Caco-2 (cell line): ENCODE measurements at regions of chr2 and their contacts with region 1.

Region 1: DNA sequence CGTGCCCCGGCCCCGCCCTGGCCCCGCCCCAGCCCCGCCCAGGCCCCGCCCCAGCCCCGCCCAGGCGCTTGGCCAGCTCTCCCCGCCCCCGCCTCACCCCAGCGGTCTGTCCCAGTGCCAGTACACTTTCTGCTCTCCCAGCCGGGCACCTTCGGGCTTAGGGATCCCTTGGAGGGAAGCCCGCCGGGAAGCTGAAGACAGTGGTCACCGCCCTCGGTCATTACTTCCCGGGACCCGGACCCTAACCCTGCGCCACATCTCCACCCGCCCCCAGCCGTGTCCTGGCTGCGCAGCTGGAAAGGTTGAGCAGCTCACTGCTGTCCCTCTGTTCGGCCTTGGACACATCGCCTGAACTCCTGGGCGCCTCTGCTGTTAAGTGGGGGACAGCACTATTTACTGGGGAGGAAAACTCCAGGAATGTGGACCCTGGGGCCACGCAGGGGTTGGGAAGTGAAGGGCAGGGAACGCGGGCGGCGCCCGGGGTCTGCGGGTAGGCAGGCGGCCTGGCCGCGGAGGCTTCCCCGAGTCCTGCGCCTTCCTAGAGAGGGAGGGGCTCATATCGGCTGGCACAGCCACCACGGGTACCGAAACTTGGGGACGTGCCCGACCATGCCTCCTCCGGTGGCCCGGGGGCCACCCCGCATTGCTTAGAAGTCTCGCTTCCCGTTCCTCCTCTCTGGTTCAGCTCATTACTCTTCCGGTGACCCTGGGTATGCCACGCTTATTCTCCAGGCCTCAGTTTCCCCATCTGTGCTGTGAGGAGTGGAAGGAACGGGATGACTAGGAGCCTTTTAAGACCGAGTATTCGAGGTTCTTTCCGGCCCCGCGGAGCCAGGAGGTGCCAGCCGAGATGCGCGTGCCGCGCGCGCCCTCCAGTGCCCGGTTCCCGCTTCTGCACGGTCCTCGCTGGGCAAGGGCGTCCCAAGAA is 121.0 kb downstream of the GYPC start:
- DNase-seq: peak; percentile 76 to 87
- H3K4me3 ChIP-seq: peak overlapping the region; percentile 44
- H3K4me3 Mint-ChIP-seq: peak overlapping the region; percentile 88
- H3K27ac Mint-ChIP-seq: peak overlapping the region; percentile 29
- H3K4me1 ChIP-seq: no peaks in the 10 kb centered on the region
- H3K4me1 Mint-ChIP-seq: peaks cover 6% of the 10 kb centered on the region
- H3K27me3 ChIP-seq: peaks cover 4% of the 10 kb centered on the region; the same call in 1 of the 2 replicates
- H3K27me3 Mint-ChIP-seq: peaks cover 28% of the 10 kb centered on the region
- CTCF ChIP-seq: peak; percentile 94 to 98

Region 2: GRCh38 chr2:124810132-124810531 is 1966.8 kb before region 1 on chr2:
- CTCF ChIA-PET with region 1: no interaction called
- POLR2A ChIA-PET with region 1: no interaction called
- intact Hi-C with region 1: loop called (anchors 1 kb)
- DNase-seq: peak; percentile 55 to 67
- H3K4me3 ChIP-seq: no peak overlapping the region
- H3K4me3 Mint-ChIP-seq: no peak overlapping the region
- H3K27ac Mint-ChIP-seq: no peak overlapping the region
- H3K4me1 ChIP-seq: peaks cover 6% of the 10 kb centered on the region; the same call in 1 of the 2 replicates
- H3K4me1 Mint-ChIP-seq: peaks cover 13% of the 10 kb centered on the region
- H3K27me3 ChIP-seq: no peaks in the 10 kb centered on the region
- H3K27me3 Mint-ChIP-seq: peaks cover 3% of the 10 kb centered on the region
- CTCF ChIP-seq: peak; percentile 33 to 63

Region 3: GRCh38 chr2:126244937-126245336 is 532.0 kb before region 1 on chr2:
- CTCF ChIA-PET with region 1: no interaction called
- POLR2A ChIA-PET with region 1: no interaction called
- intact Hi-C with region 1: loop called (anchors 1 kb)
- DNase-seq: peak; percentile 62 to 72
- H3K4me3 ChIP-seq: no peak overlapping the region
- H3K4me3 Mint-ChIP-seq: no peak overlapping the region
- H3K27ac Mint-ChIP-seq: no peak overlapping the region
- H3K4me1 ChIP-seq: no peaks in the 10 kb centered on the region
- H3K4me1 Mint-ChIP-seq: no peaks in the 10 kb centered on the region
- H3K27me3 ChIP-seq: no peaks in the 10 kb centered on the region
- H3K27me3 Mint-ChIP-seq: no peaks in the 10 kb centered on the region
- CTCF ChIP-seq: peak; percentile 60 to 79

Region 4: GRCh38 chr2:126399001-126399400 is 378.0 kb before region 1 on chr2:
- CTCF ChIA-PET with region 1: interaction called, 7 read pairs
- POLR2A ChIA-PET with region 1: no interaction called
- intact Hi-C with region 1: loop called (anchors 1 kb)
- DNase-seq: peak in 1 of 2 experiments; percentile 16
- H3K4me3 ChIP-seq: no peak overlapping the region
- H3K4me3 Mint-ChIP-seq: no peak overlapping the region
- H3K27ac Mint-ChIP-seq: no peak overlapping the region
- H3K4me1 ChIP-seq: no peaks in the 10 kb centered on the region
- H3K4me1 Mint-ChIP-seq: no peaks in the 10 kb centered on the region
- H3K27me3 ChIP-seq: no peaks in the 10 kb centered on the region
- H3K27me3 Mint-ChIP-seq: peaks cover 8% of the 10 kb centered on the region
- CTCF ChIP-seq: peak; percentile 8 to 31

Region 5: GRCh38 chr2:126634273-126634861 is 142.6 kb before region 1 on chr2:
- CTCF ChIA-PET with region 1: no interaction called
- POLR2A ChIA-PET with region 1: no interaction called
- intact Hi-C with region 1: loop called (anchors 1 kb)
- DNase-seq: peak in 1 of 2 experiments; percentile 49
- H3K4me3 ChIP-seq: no peak overlapping the region
- H3K4me3 Mint-ChIP-seq: no peak overlapping the region
- H3K27ac Mint-ChIP-seq: no peak overlapping the region
- H3K4me1 ChIP-seq: no peaks in the 10 kb centered on the region
- H3K4me1 Mint-ChIP-seq: no peaks in the 10 kb centered on the region
- H3K27me3 ChIP-seq: no peaks in the 10 kb centered on the region
- H3K27me3 Mint-ChIP-seq: peaks cover 14% of the 10 kb centered on the region
- CTCF ChIP-seq: peak; percentile 78 to 87

Region 6: DNA sequence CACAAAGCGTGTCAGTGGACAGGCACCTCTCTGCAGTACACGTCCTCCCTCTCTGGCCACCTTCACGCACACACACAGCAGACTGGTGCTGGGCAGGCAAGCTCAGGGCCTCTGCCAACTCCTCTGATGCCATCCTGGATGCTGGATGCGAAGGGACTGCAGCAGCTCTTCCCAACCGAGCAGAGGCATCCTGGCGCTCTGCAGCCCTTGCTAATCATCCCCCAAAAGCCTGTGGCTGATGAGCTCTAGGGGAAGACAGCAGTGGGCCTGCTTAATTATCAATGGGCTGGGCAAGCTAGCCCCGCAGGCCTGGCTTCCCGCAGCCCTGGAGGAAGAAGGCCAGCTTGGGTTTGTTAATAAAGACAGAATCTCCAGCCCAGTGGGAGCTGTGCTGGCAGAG is 50.4 kb after region 1 on chr2:
- CTCF ChIA-PET with region 1: no interaction called
- POLR2A ChIA-PET with region 1: no interaction called
- intact Hi-C with region 1: no loop called
- DNase-seq: no peak
- H3K4me3 ChIP-seq: no peak overlapping the region
- H3K4me3 Mint-ChIP-seq: no peak overlapping the region
- H3K27ac Mint-ChIP-seq: no peak overlapping the region
- H3K4me1 ChIP-seq: no peaks in the 10 kb centered on the region
- H3K4me1 Mint-ChIP-seq: no peaks in the 10 kb centered on the region
- H3K27me3 ChIP-seq: no peaks in the 10 kb centered on the region
- H3K27me3 Mint-ChIP-seq: peaks cover 17% of the 10 kb centered on the region
- CTCF ChIP-seq: no peak